ENCODE measurements at regions of chr3 and their contacts with region 1.

Region 1: DNA sequence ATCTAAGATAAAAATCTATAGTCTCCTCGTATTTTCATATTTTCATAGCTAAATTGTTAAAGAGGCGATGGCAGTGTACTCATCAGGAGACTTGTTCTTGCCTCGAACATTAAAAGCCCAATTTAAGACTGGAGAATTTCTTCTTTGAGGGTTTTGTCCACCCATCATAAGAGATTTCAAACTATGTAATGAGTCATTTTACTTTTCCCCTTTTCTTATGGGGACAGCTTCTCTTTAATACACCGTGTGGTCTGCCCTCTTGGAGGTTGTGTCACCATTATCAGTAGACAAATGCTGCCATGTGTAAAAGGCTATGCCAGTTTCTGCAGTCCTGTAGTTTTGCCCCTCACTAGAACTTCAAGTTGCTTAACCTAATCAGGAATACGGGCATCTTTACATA is 16.9 kb downstream of the TGFBR2 start:
- DNase-seq: no peak
- H3K4me3 Mint-ChIP-seq: peak overlapping the region; percentile 66
- H3K27ac Mint-ChIP-seq: peak overlapping the region; percentile 90
- H3K4me1 Mint-ChIP-seq: peaks cover 83% of the 10 kb centered on the region
- H3K27me3 Mint-ChIP-seq: no peaks in the 10 kb centered on the region

Region 2: GRCh38 chr3:30502742-30503073 is 120.6 kb before region 1 on chr3:
- intact Hi-C with region 1: loop called (anchors 2 kb)
- DNase-seq: no peak
- H3K4me3 Mint-ChIP-seq: no peak overlapping the region
- H3K27ac Mint-ChIP-seq: no peak overlapping the region
- H3K4me1 Mint-ChIP-seq: peaks cover 35% of the 10 kb centered on the region
- H3K27me3 Mint-ChIP-seq: no peaks in the 10 kb centered on the region

Region 3: DNA sequence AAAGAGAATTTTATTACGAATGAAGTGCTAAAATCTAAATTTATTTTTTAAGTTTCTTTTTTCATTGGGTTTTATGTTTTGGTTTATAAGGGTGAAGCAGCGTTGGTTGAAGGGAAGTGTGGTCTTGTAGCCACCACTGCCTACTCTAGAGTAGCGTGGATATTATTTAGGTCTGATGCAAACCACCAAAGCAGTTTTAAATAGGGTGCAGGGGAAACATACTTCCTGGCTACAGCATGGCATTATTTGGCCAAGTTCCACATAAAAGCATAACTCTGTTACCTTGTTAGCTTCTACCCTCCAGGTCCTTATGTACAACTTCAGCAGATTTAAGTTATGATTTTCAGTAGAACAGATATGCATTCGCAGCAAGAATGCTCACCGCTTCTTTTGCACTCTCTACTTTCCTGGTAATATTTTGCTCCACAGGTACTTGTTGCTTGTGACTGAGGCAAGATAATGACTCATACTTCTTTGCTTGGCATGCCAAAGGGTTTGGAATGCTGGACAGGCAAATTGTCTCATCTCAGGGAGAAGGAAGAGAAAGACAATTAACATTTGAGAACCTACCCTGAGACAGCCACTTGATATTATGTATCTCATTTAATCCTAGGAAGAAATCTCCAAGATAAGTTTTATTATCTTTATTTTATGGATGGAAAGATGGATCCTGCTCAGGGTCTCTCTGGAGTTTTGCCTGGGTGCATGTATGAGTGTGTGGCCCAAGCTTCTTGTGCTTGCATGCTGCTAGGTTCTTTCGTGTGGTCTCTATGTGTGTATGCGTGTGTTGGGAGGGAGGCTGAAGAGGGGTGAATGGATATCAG is 11.5 kb before region 1 on chr3:
- intact Hi-C with region 1: loop called (anchors 1 kb)
- DNase-seq: no peak
- H3K4me3 Mint-ChIP-seq: peak overlapping the region; percentile 97
- H3K27ac Mint-ChIP-seq: peak overlapping the region; percentile 93
- H3K4me1 Mint-ChIP-seq: peaks cover 84% of the 10 kb centered on the region
- H3K27me3 Mint-ChIP-seq: no peaks in the 10 kb centered on the region

Region 4: GRCh38 chr3:30634761-30635735 is 11.7 kb after region 1 on chr3:
- intact Hi-C with region 1: loop called (anchors 1 kb)
- DNase-seq: no peak
- H3K4me3 Mint-ChIP-seq: peak overlapping the region; percentile 77
- H3K27ac Mint-ChIP-seq: peak overlapping the region; percentile 97
- H3K4me1 Mint-ChIP-seq: peaks cover 98% of the 10 kb centered on the region
- H3K27me3 Mint-ChIP-seq: no peaks in the 10 kb centered on the region

Measured in activated T-helper 1 cell treated with anti-CD3 and anti-CD28 coated beads, Interleukin-12 subunit alpha, Interleukin-12 subunit beta, Interleukin-2, Interleukin-4 antibody, amounts not matched to agents 30 ng/mL and 10 ng/mL and 1 ng/mL, durations not matched to agents 14 hours and 24 hours and 36 hours (primary cell).